Dorsolateral prefrontal cortex (tissue), 120 donors: ENCODE measurements at regions of chr3 and their contacts with region 1.

Region 1: GRCh38 chr3:196867507-196868296 is at the start of gene SENP5:
- DNase-seq: peak; percentile 81 to 96 (median 90)
- H3K4me3 ChIP-seq: peak within 1 kb of the TSS; percentile 63 to 100 (median 97)
- H3K27ac ChIP-seq: peak within 1 kb of the TSS in 58 of 59 donors; percentile 48 to 97 (median 91)
- H3K27me3 ChIP-seq: no peaks in the 10 kb centered on the region
- CTCF ChIP-seq: peak in 29 of 56 donors; percentile 3 to 59 (median 27)
- total RNA-seq, gene SENP5: 43.6 to 79.0 (median 59.0) TPM

Region 2: DNA sequence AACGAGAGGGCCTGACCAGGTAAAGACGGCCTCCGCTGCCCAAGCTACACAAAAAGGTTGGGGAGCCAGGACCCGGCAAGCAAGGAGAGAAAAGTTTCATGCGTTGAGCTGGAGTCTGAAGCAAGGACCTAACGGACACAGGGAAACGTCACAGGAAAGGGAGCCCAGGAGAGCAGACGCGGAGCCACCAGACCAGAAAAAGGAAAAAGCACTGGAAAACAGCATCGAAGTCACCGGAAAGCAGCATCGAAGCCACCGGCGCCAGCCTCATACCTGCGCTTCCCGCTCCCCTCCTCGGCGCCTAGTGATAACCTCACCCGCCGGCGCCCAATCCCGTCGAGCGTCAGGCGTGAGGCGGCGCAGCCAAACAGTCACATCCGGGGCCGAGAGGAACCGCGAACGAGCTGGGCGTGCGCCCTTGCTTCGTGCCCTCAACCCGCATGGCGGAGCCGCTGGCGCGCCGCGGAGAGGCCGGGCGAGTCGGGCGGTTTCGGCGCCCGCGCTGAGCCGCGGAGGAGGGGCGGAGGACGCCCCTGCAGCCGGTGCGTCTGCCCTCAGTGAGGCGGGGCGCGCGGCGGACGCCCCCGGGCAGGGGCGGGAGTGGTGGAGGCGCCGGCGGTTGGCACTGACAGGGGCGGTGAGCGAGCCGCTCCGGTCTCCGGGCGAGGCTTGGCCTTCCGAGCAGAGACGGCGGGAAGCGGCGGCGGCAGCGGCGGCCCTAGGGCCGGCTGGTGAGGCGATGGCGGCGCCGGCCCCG is 299.3 kb before region 1 on chr3 and contains the starts of genes FBXO45 and WDR53:
- intact Hi-C with region 1: loop called (anchors 5 kb)
- DNase-seq: peak; percentile 85 to 96 (median 93)
- H3K4me3 ChIP-seq: peak within 1 kb of the TSS; percentile 63 to 100 (median 94)
- H3K27ac ChIP-seq: peak within 1 kb of the TSS in 56 of 59 donors; percentile 10 to 91 (median 77)
- H3K27me3 ChIP-seq: no peaks in the 10 kb centered on the region
- CTCF ChIP-seq: peak in 43 of 56 donors; percentile 7 to 65 (median 38)
- total RNA-seq, gene FBXO45: 12.3 to 28.8 (median 20.8) TPM
- total RNA-seq, gene WDR53: 6.0 to 19.1 (median 12.3) TPM

Region 3: DNA sequence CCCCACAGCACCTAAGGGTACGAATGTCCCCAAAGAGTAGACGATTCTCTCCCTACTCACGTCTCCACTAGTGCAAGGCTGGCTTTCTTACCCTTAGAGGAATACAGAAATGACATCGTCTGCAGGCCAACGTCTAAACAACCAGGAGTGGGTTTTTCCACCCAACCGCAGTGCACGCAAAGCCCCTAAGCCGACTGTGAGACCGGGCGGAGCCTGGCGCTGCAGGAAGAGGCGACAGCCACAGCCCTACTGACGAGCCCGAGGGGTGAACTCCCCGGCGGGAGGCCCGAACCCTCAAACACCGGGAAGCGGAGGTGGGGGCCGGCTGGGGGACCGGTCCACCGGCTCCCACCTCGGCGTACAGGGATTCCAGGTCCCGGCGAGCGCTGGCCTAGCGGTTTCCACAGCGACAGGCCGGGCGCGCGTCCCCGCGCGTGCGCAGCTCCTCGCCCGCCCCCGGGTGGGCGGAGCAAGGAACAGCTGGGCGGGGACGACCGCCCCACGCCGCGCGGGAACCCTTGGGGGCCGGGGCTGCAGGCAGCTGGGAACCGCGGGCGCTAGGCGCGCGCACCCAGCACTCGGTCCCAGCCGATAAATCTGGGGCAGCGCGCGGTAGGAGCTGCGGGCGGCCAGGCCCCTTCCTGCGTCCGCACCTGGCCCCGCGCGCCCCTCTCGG is 155.7 kb before region 1 on chr3 and contains the starts of genes CEP19 and PIGX:
- intact Hi-C with region 1: loop called (anchors 2 to 10 kb)
- DNase-seq: peak; percentile 78 to 95 (median 86)
- H3K4me3 ChIP-seq: peak within 1 kb of the TSS; percentile 61 to 98 (median 90)
- H3K27ac ChIP-seq: peak within 1 kb of the TSS; percentile 39 to 97 (median 90)
- H3K27me3 ChIP-seq: no peaks in the 10 kb centered on the region
- CTCF ChIP-seq: peak in 40 of 56 donors; percentile 8 to 65 (median 32)
- total RNA-seq, gene CEP19: 2.8 to 14.6 (median 8.6) TPM
- total RNA-seq, gene PIGX: 23.5 to 51.0 (median 37.0) TPM

Region 4: GRCh38 chr3:196739671-196740480 is 127.8 kb before region 1 on chr3 and contains the start of gene PAK2:
- intact Hi-C with region 1: loop called (anchors 1 to 2 kb)
- DNase-seq: peak; percentile 91 to 95 (median 94)
- H3K4me3 ChIP-seq: peak within 1 kb of the TSS; percentile 47 to 99 (median 92)
- H3K27ac ChIP-seq: peak within 1 kb of the TSS; percentile 63 to 98 (median 96)
- H3K27me3 ChIP-seq: no peaks in the 10 kb centered on the region
- CTCF ChIP-seq: peak in 55 of 56 donors; percentile 22 to 79 (median 59)
- total RNA-seq, gene PAK2: 28.1 to 67.1 (median 44.9) TPM